Activated T-helper 1 cell treated with anti-CD3 and anti-CD28 coated beads, Interleukin-12 subunit alpha, Interleukin-12 subunit beta, Interleukin-2, Interleukin-4 antibody, amounts not matched to agents 30 ng/mL and 10 ng/mL and 1 ng/mL, durations not matched to agents 14 hours and 24 hours and 36 hours (primary cell): ENCODE measurements at regions of chr4 and their contacts with region 1.

Region 1: DNA sequence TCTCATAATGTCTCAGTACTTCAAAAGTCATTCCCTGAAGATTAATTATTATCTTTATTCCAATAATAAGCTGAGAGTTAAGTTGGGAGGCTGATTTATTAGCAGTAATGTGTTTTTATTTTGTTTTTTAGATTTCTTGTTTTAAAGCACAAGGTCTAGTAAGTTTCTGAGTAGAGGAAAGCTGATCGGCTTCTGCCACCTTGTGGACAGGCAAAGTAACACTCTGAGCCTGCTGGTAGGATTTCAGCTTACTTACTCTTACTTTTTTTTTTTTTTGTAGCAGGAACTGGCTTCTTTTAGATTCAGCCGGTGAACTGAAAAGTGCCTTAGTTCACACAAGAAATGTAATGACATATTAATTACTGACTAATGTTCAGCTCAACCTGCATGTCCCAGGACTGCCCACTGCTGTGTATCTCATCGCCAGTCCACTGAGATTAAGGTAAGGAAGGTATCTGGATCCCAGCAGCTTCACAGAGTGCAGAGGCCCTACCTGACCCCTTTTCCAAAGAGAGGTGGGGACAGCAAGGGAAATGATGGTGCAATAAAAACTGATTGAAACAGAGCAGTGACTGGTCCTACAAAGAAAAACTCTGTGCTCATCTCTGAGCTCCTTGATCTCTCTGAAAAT is 126.5 kb downstream of the ADGRA3 start:
- DNase-seq: peak; percentile 20
- H3K4me3 Mint-ChIP-seq: no peak overlapping the region
- H3K27ac Mint-ChIP-seq: no peak overlapping the region
- H3K4me1 Mint-ChIP-seq: peaks cover 13% of the 10 kb centered on the region
- H3K27me3 Mint-ChIP-seq: no peaks in the 10 kb centered on the region

Region 2: DNA sequence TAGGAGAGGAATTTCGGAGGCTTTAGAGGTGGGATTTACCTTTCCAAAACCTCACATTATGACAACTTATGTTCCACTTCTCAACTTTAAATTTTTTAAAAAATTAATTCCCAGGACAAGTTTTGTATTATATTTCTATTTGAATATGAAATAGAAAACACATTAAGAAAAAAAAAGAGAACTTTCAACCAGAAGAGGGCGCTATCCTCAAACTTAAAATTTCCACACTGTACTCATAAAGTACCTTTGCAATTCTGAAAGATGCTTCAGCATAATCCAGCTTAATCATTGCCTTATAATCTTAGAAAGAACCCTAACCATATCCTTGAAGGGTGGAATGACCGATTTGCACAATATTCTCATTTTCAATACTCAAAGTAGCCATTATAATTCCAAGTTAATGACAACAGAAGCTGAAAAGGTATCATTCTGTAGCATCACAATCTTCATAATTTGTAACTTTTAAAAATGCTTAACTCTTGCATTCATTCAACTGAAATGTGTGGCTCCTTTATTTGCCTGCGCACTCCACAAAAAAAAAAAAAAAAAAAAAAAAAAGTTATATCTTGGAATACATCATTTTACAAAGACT is 598.8 kb before region 1 on chr4:
- intact Hi-C with region 1: loop called (anchors 1 kb)
- DNase-seq: no peak
- H3K4me3 Mint-ChIP-seq: no peak overlapping the region
- H3K27ac Mint-ChIP-seq: no peak overlapping the region
- H3K4me1 Mint-ChIP-seq: no peaks in the 10 kb centered on the region
- H3K27me3 Mint-ChIP-seq: no peaks in the 10 kb centered on the region

Region 3: DNA sequence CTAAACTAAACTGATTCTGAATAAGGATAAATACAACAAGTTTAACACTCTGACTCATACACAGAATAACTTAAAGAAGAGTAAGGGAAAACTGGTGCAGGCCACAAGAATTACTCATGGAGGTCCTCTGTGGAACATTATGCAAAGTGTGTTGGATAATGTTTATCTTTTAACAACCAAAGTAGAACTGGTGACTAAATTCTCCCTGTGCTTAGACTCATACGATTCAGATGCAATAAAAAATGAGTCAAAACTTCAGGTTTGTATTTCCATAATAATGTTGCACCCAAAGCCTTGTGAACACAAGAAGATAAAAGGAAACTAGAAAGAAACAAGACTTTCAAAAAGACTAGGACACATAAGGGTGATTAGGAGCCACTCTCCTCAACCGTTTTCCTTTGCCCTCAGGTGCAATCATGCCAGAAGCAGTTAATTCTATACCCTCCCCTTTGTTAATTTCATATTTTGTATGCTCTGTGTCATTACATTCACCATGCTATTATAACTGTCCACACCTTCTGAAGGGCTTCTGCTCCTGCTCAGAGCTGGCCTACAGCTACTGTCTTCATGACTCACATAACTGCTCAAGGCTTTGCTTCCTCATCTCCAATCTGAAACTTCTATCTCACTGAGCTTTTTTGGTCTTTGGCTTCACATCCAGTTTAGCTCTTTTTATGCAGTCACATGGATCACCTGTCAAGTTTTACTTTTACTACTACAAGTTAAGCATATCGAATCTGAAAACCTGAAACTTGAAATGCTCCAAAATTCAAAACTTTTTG is 501.0 kb before region 1 on chr4:
- intact Hi-C with region 1: loop called (anchors 5 kb)
- DNase-seq: no peak
- H3K4me3 Mint-ChIP-seq: no peak overlapping the region
- H3K27ac Mint-ChIP-seq: peak overlapping the region; percentile 81
- H3K4me1 Mint-ChIP-seq: no peaks in the 10 kb centered on the region
- H3K27me3 Mint-ChIP-seq: no peaks in the 10 kb centered on the region

Region 4: GRCh38 chr4:21976166-21976565 is 413.2 kb before region 1 on chr4:
- intact Hi-C with region 1: no loop called
- DNase-seq: no peak
- H3K4me3 Mint-ChIP-seq: no peak overlapping the region
- H3K27ac Mint-ChIP-seq: no peak overlapping the region
- H3K4me1 Mint-ChIP-seq: no peaks in the 10 kb centered on the region
- H3K27me3 Mint-ChIP-seq: peaks cover 2% of the 10 kb centered on the region

Region 5: GRCh38 chr4:22237155-22237751 is 152.1 kb before region 1 on chr4:
- intact Hi-C with region 1: loop called (anchors 1 kb)
- DNase-seq: peak; percentile 46
- H3K4me3 Mint-ChIP-seq: peak overlapping the region; percentile 51
- H3K27ac Mint-ChIP-seq: no peak overlapping the region
- H3K4me1 Mint-ChIP-seq: peaks cover 33% of the 10 kb centered on the region
- H3K27me3 Mint-ChIP-seq: no peaks in the 10 kb centered on the region

Region 6: GRCh38 chr4:22500831-22501719 is 111.7 kb after region 1 on chr4:
- intact Hi-C with region 1: loop called (anchors 1 kb)
- DNase-seq: no peak
- H3K4me3 Mint-ChIP-seq: peak overlapping the region; percentile 11
- H3K27ac Mint-ChIP-seq: peak overlapping the region; percentile 73
- H3K4me1 Mint-ChIP-seq: peaks cover 6% of the 10 kb centered on the region
- H3K27me3 Mint-ChIP-seq: no peaks in the 10 kb centered on the region

Region 7: GRCh38 chr4:22688236-22688635 is 298.9 kb after region 1 on chr4:
- intact Hi-C with region 1: loop called (anchors 1 kb)
- DNase-seq: no peak
- H3K4me3 Mint-ChIP-seq: no peak overlapping the region
- H3K27ac Mint-ChIP-seq: no peak overlapping the region
- H3K4me1 Mint-ChIP-seq: no peaks in the 10 kb centered on the region
- H3K27me3 Mint-ChIP-seq: peaks cover 10% of the 10 kb centered on the region